ENCODE measurements at regions of chr7 and their contacts with region 1.

Region 1: GRCh38 chr7:45890902-45891461 is 2.7 kb downstream of the IGFBP1 start:
- DNase-seq: peak in 3 of 5 donors; percentile 6 to 16 (median 13)
- H3K4me3 ChIP-seq: no peak overlapping the region
- H3K4me3 Mint-ChIP-seq: no peak overlapping the region
- H3K27ac ChIP-seq: no peak overlapping the region
- H3K27ac Mint-ChIP-seq: no peak overlapping the region
- H3K4me1 ChIP-seq: no peaks in the 10 kb centered on the region
- H3K4me1 Mint-ChIP-seq: peaks cover 0 to 6% (median 1%) of the 10 kb centered on the region in 4 donors
- H3K27me3 ChIP-seq: no peaks in the 10 kb centered on the region
- H3K27me3 Mint-ChIP-seq: peaks cover 25 to 54% of the 10 kb centered on the region in 2 donors

Region 2: DNA sequence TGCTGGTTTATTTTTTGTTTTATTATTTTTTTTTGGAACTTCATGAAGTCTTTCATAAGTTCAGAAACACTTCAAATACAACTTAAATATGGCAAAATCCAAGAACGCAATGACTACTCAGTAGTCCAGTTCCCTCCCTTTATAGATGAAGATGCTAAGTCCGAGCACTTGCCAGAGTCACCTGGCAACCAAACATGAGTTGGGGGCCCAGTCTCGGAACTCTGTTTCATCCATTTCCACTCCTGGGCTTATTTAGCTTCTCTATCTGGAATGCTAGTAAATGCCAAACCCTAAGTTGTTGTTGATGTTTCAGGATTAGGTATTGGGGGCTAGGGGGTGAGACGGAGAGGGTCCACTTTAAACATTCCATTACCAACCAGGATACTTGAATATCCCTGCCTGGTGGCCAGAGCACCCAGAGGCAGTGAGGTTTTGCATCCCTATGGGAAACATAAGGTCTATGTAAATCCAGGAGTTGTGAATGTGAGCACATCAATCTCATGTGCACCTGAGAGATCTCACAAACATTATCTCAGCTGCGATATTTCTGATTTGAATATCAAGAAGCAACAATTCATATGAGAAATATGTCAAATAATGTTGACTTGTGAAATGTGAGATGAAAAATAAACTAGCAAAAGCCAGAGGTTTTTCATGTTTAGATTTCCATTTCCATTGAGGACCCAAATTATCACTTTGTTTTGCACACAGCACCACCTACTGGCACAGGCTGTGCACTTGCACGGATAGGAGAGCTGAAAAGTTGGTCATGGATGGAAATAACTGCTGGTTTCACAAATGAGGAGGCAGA is 1928.0 kb after region 1 on chr7:
- CTCF ChIA-PET with region 1: no interaction called
- POLR2A ChIA-PET with region 1: no interaction called
- intact Hi-C with region 1: loop called (anchors 5 kb)
- DNase-seq: no peak
- H3K4me3 ChIP-seq: no peak overlapping the region
- H3K4me3 Mint-ChIP-seq: no peak overlapping the region
- H3K27ac ChIP-seq: no peak overlapping the region
- H3K27ac Mint-ChIP-seq: no peak overlapping the region
- H3K4me1 ChIP-seq: no peaks in the 10 kb centered on the region
- H3K4me1 Mint-ChIP-seq: no peaks in the 10 kb centered on the region
- H3K27me3 ChIP-seq: no peaks in the 10 kb centered on the region
- H3K27me3 Mint-ChIP-seq: no peaks in the 10 kb centered on the region

Measured in CD4-positive, alpha-beta memory T cell (primary cell).